HEK293T (cell line): ENCODE measurements at regions of chrX and their contacts with region 1.

Region 1: DNA sequence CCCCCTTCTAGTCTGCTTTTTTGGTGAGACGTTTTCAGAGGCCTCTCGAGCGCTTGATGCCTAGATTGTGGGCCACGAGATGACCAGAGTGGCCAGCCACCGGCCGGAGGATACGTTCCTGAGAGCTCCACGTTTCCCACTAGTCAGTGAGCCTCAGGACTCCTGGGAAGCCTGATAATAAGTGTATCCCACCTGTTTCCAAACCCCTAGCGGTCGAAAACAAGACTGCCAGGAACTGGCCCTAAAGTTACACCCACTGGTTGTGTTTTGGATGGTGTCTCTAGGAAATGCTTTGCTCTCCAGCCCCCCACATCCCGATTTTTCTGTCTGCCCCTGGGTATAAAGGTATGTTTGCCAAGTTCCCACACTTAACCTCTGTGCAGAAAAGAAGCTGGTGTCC is 4.6 kb upstream of the RS1 start:
- DNase-seq: peak; percentile 72

Region 2: GRCh38 chrX:18698737-18699650 is 22.5 kb after region 1 on chrX:
- CTCF ChIA-PET with region 1: interaction called, 10 read pairs
- POLR2A ChIA-PET with region 1: no interaction called
- DNase-seq: no peak

Region 3: GRCh38 chrX:18721683-18722499 is 45.4 kb after region 1 on chrX:
- CTCF ChIA-PET with region 1: no interaction called
- POLR2A ChIA-PET with region 1: no interaction called
- DNase-seq: no peak